ENCODE measurements at regions of chr6 and their contacts with region 1.

Region 1: DNA sequence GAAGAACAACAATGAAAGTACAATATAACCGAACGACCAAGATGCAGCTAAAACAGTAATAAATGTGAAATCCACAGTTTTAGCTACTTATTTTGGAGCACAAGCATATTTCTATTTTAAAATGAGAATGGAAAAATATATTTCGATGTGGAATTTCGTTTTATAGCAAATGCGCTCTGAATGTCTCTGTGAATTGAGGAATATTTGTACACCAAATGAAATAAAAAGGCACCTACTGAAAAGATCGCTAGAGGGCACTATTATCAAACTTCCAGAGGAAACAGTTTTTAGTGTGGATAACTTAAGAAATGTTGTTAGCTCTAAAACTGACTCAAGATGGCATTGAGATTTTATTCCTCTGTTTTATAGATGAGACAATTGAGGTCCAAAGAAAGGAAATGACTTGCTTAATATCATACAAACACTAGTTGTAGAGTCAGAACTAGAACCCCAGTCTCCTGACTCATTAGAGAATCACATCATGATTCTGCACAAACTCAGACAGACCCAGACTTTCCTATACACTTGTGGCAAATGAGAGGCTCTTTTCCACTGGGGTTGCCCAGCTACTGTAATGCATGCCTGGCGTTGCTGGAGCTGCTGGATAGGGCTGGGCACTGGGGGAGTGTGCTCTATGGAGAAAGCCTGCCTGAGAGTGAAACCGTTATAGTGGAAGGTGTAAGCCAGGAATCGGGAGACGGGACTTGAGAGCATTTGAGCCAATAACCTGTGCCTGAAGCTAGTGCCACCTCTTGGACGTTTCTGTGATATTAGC is 51.9 kb downstream of the GCLC start:
- DNase-seq: no peak
- H3K4me3 ChIP-seq: peak overlapping the region in 1 of 3 donors; percentile 15
- H3K27ac ChIP-seq: no peak overlapping the region
- H3K4me1 ChIP-seq: no peaks in the 10 kb centered on the region
- H3K27me3 ChIP-seq: no peaks in the 10 kb centered on the region
- CTCF ChIP-seq: peak; percentile 41 to 73 (median 71)
- POLR2A ChIP-seq: no peak

Region 2: DNA sequence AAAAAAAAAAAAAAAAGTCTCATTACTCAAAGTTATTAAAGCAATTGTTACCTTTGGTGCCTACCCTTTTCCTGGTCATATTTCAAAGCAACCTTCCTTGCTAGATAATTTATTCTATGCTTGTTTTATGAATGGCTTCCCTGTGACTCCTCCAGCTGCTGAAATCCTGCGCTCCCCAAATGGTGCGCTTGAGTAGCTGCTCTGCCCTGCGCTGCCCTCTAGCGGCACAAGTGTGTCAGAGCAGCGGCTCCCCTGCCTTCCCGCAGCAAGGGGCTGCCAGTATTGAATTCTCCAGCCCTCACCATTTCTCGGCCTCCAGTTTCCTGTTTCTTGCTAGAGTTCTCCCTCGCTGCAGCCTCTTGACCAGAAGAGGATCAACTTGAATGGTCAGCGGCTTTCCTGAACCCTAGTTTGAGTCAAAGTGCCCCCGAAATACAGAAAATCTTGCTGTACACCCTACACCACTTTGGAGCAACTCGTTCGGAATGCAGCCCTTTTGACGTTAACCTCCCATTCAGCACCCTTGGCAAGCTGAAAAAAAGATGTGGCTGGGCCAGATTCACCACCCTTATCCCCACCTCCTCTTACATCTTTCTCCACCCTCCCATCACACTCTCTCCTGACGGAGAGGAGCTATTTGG is 232.9 kb after region 1 on chr6:
- intact Hi-C with region 1: loop called (anchors 10 kb)
- DNase-seq: peak; percentile 36 to 74
- H3K4me3 ChIP-seq: no peak overlapping the region
- H3K27ac ChIP-seq: no peak overlapping the region
- H3K4me1 ChIP-seq: no peaks in the 10 kb centered on the region
- H3K27me3 ChIP-seq: no peaks in the 10 kb centered on the region
- CTCF ChIP-seq: peak; percentile 71 to 84 (median 78)
- POLR2A ChIP-seq: no peak

Measured in breast epithelium (tissue), 4 donors.